Left lung (tissue), 14 donors: ENCODE measurements at regions of chr22 and their contacts with region 1.

Region 1: GRCh38 chr22:23838681-23839468 is at the start of gene DERL3:
- DNase-seq: peak; percentile 69 to 100 (median 96)
- ATAC-seq: peak; percentile 95
- H3K4me3 ChIP-seq: peak within 1 kb of the TSS; percentile 45 to 66
- H3K27ac ChIP-seq: no peak within 1 kb of the TSS
- H3K4me1 ChIP-seq: peaks cover 9 to 21% of the 10 kb centered on the region in 2 donors
- H3K27me3 ChIP-seq: no peaks in the 10 kb centered on the region
- CTCF ChIP-seq: no peak
- polyA plus RNA-seq, gene DERL3: 2.4 to 4.7 (median 3.8) TPM

Region 2: GRCh38 chr22:23772649-23773495 is 66.0 kb before region 1 on chr22 and contains the start of gene MMP11:
- intact Hi-C with region 1: loop called in 1 of 2 experiments (anchors 5 kb)
- DNase-seq: peak in 3 of 4 donors; percentile 59 to 87 (median 60)
- ATAC-seq: peak; percentile 57
- H3K4me3 ChIP-seq: peak within 1 kb of the TSS; percentile 17 to 32
- H3K27ac ChIP-seq: no peak within 1 kb of the TSS
- H3K4me1 ChIP-seq: peaks cover 4 to 36% of the 10 kb centered on the region in 2 donors
- H3K27me3 ChIP-seq: peaks cover 0 to 20% of the 10 kb centered on the region in 2 donors
- CTCF ChIP-seq: no peak
- polyA plus RNA-seq, gene MMP11: 8.1 to 10.7 (median 9.8) TPM

Region 3: DNA sequence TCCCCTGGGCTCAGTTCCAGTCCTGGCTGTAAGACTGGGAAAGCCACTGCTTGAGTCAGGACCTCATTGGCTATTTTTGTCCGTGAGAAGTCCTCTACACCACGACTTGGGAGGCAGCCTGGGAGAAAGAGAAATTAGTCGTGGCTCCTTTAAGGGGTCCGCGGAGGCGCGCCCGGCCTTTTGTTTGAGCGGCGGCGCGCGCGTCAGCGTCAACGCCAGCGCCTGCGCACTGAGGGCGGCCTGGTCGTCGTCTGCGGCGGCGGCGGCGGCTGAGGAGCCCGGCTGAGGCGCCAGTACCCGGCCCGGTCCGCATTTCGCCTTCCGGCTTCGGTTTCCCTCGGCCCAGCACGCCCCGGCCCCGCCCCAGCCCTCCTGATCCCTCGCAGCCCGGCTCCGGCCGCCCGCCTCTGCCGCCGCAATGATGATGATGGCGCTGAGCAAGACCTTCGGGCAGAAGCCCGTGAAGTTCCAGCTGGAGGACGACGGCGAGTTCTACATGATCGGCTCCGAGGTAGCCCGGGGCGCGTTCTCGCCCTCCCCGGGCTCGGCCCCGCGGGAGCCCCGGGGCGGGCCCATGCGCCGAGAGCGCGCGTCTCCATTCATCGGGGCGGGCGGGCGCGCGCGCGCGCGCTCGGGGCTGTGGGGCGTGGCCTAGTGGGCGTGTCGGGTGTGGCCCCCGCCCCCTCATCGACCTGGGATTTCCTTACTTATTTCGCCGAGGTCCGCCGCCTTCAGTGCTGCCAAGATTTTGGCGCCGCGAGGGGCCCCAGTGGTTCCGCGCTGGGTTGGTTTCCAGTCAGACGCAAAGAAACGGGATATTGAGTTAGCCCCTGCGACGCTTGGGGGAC is 51.9 kb before region 1 on chr22 and contains the start of gene SMARCB1:
- intact Hi-C with region 1: loop called in 1 of 2 experiments (anchors 10 kb)
- DNase-seq: peak; percentile 88 to 96 (median 91)
- ATAC-seq: peak; percentile 99
- H3K4me3 ChIP-seq: peak within 1 kb of the TSS; percentile 84 to 93
- H3K27ac ChIP-seq: peak within 1 kb of the TSS; percentile 99 to 100
- H3K4me1 ChIP-seq: peaks cover 8 to 34% of the 10 kb centered on the region in 2 donors
- H3K27me3 ChIP-seq: no peaks in the 10 kb centered on the region
- CTCF ChIP-seq: no peak
- polyA plus RNA-seq, gene SMARCB1: 134 to 166 (median 144) TPM

Region 4: DNA sequence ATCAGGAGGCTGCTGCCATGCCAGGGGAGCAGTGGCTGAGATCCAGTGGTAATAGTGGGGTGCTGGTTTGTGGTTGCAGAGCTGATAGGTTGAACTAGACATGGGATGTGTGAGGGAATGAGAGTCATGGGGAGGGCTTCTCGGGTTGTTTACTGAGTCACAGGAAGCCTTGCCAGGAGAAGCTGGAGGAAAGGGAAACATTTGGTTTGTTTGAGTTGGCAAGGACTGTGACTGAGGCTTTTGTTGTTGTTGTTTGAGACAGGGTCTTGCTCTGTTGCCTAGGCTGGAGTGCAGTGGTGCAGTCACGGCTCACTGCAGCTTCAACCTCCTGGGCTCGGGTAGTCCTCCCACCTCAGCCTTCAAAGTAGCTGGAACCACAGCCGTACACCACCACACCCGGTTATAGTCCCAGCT is 221.5 kb after region 1 on chr22:
- intact Hi-C with region 1: no loop called
- DNase-seq: peak in 2 of 4 donors; percentile 17 to 44
- ATAC-seq: peak; percentile 68
- H3K4me3 ChIP-seq: no peak overlapping the region
- H3K27ac ChIP-seq: peak overlapping the region in 1 of 2 donors; percentile 53
- H3K4me1 ChIP-seq: peaks cover 0 to 4% of the 10 kb centered on the region in 2 donors
- H3K27me3 ChIP-seq: no peaks in the 10 kb centered on the region
- CTCF ChIP-seq: no peak

Region 5: GRCh38 chr22:24076091-24076867 is 237.4 kb after region 1 on chr22:
- intact Hi-C with region 1: no loop called
- DNase-seq: no peak
- ATAC-seq: no peak
- H3K4me3 ChIP-seq: no peak overlapping the region
- H3K27ac ChIP-seq: no peak overlapping the region
- H3K4me1 ChIP-seq: no peaks in the 10 kb centered on the region
- H3K27me3 ChIP-seq: no peaks in the 10 kb centered on the region
- CTCF ChIP-seq: no peak

Region 6: DNA sequence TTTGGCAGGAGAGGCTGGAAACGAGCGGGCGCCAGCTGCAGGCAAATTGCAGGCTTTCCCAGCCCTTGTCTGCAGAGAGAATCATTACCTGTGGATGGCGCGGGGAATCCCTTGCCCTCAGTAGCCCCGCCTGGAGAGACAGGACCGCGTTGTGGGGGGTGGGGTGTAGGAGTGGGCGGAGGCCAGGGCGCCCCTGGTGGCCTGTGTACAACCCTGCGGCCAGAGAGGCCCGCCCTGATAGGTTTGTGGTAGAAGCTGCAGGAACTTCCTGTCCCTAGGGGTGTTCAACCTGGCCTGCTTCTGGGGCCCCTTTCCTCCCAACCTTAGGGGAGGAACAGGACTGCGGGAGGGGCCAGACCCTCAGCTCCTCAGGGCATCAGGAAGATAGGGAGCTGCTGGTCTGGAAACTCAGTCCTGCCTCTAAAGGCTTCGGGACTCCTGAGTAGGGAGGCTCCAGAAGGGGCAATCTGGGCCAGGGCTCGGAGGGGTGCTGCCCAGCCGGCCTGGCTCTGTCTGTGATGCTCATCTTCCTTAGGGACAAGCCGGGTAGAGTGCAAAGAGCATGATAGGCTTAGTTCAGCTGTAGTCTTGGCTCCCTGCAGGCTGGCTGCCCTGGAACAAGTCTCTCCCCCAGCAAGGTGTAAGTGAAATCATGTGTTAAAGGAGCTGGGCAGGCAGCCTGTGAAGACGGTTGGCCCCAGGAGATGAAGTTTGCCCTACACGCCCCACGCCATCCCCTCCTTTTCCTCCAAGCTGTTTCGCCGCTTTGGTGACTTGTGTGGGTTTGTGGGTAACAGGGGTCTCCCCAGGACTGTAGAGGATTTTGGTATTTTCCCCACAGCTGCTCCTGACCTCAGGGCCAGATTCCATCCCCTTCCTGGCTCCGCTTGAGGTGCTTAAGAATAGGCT is 318.3 kb after region 1 on chr22:
- intact Hi-C with region 1: no loop called
- DNase-seq: peak in 3 of 4 donors; percentile 86 to 96 (median 91)
- ATAC-seq: peak; percentile 85
- H3K4me3 ChIP-seq: peak overlapping the region; percentile 72 to 83
- H3K27ac ChIP-seq: peak overlapping the region; percentile 82 to 91
- H3K4me1 ChIP-seq: peaks cover 45 to 93% of the 10 kb centered on the region in 2 donors
- H3K27me3 ChIP-seq: no peaks in the 10 kb centered on the region
- CTCF ChIP-seq: peak; percentile 69 to 91